BJ (cell line): ENCODE measurements at regions of chr18 and their contacts with region 1.

Region 1: GRCh38 chr18:36284671-36285295 is 12.7 kb upstream of the FHOD3 start:
- DNase-seq: no peak
- H3K4me3 ChIP-seq: no peak overlapping the region
- H3K27me3 ChIP-seq: no peaks in the 10 kb centered on the region
- CTCF ChIP-seq: peak; percentile 79

Region 2: GRCh38 chr18:36015629-36016028 is 269.2 kb before region 1 on chr18:
- CTCF ChIA-PET with region 1: interaction called, 19 read pairs
- POLR2A ChIA-PET with region 1: no interaction called
- DNase-seq: no peak
- H3K4me3 ChIP-seq: no peak overlapping the region
- H3K27me3 ChIP-seq: no peaks in the 10 kb centered on the region
- CTCF ChIP-seq: no peak

Region 3: GRCh38 chr18:36095936-36096519 is 188.8 kb before region 1 on chr18:
- CTCF ChIA-PET with region 1: interaction called, 67 read pairs
- POLR2A ChIA-PET with region 1: no interaction called
- DNase-seq: peak; percentile 18
- H3K4me3 ChIP-seq: no peak overlapping the region
- H3K27me3 ChIP-seq: no peaks in the 10 kb centered on the region
- CTCF ChIP-seq: peak; percentile 41